ENCODE measurements at regions of chr20 and their contacts with region 1.

Region 1: DNA sequence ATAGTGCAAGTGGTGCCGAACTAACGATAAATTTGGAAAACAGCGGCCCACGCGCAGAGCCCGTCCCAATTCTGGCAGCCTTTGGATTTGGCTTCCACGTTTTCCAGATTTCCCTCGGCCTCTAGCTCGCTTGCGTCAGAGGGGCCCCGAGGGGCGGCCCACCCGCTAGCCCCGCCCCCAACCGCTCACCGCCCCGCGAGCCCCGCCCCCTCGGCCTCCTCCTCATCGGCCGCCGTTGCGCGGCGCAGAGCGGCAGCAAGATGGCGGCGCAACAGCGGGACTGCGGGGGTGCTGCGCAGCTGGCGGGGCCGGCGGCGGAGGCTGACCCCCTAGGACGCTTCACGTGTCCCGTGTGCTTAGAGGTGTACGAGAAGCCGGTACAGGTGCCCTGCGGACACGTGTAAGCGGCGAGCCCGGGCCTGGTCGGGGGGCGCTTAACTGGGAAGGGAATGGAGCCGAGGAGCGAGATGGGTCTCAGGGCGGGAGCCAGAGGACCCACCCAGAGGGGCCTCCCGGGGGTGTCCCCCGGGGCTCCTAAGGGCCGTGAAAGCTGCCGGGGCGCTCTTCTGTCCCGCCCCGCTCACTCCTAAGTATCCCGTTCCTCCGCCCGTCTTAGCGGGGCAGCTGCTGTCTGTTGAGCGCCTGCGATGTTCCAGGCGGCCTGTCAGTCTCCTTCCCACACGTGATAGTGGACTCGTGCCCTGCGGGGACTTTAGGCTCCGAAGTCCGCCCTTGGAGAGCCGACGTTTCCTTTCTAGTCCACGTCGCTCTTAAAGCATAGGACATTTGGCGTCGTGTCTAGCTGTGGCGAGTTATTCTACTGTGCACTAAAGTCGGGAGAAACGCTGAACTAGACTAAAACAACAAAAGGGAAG is at the start of gene RNF114:
- DNase-seq: peak; percentile 83
- ATAC-seq: peak; percentile 90
- H3K4me3 Mint-ChIP-seq: peak within 1 kb of the TSS; percentile 97
- H3K27ac Mint-ChIP-seq: peak within 1 kb of the TSS; percentile 88
- H3K4me1 Mint-ChIP-seq: peaks cover 58% of the 10 kb centered on the region
- H3K27me3 Mint-ChIP-seq: no peaks in the 10 kb centered on the region
- CTCF ChIP-seq: no peak
- total RNA-seq, gene RNF114: 56.5 and 56.6 TPM in 2 replicates

Region 2: DNA sequence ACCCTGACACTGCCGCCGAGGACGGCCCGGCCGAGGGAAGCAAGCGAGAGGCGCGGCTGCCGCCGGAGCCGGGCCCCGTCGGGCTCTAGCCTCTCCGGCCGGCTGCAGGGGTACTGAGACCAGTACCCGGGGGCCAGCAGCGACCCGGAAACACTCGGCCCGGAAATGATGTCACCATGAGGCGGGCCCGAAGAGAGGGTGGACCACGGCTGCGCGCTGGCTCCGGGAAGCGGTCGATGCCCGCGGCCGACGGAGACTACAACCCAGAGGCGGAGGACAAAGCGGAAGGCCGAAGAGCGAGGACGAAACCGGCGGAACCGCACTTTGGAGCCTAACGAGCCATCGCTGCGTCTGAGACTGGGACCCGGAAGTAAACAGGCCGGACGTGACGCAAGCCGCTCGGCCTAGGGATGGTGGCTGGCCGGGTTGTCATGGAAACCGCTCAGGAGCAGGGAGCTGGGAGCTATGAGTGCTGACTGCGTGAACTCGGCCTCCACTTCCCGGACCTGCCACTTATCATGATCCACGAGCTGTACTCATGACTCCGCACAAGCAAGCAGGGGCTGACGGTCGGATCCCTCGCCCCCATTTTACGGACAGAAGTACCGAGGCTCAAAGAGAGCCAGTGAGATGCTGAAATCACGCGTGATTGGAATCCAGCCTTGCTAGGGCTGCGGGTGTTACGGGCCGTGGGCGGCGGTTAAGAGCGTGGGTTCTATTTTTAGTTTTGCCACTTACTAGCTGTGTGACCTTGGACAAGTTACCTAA is 20.8 kb before region 1 on chr20 and contains the start of gene SPATA2:
- CTCF ChIA-PET with region 1: interaction called, 5 read pairs
- POLR2A ChIA-PET with region 1: interaction called, 45 read pairs
- intact Hi-C with region 1: loop called (anchors 1 kb)
- DNase-seq: peak; percentile 95
- ATAC-seq: peak; percentile 80
- H3K4me3 Mint-ChIP-seq: peak within 1 kb of the TSS; percentile 97
- H3K27ac Mint-ChIP-seq: peak within 1 kb of the TSS; percentile 99
- H3K4me1 Mint-ChIP-seq: peaks cover 34% of the 10 kb centered on the region
- H3K27me3 Mint-ChIP-seq: no peaks in the 10 kb centered on the region
- CTCF ChIP-seq: no peak
- total RNA-seq, gene SPATA2: 9.1 and 9.4 TPM in 2 replicates

Region 3: GRCh38 chr20:50153485-50154377 is 217.3 kb after region 1 on chr20 and contains the start of gene PEDS1:
- CTCF ChIA-PET with region 1: no interaction called
- POLR2A ChIA-PET with region 1: interaction called, 11 read pairs
- intact Hi-C with region 1: no loop called
- DNase-seq: peak; percentile 78
- ATAC-seq: peak; percentile 98
- H3K4me3 Mint-ChIP-seq: peak within 1 kb of the TSS; percentile 85
- H3K27ac Mint-ChIP-seq: peak within 1 kb of the TSS; percentile 59
- H3K4me1 Mint-ChIP-seq: peaks cover 36% of the 10 kb centered on the region
- H3K27me3 Mint-ChIP-seq: no peaks in the 10 kb centered on the region
- CTCF ChIP-seq: no peak
- total RNA-seq, gene PEDS1: 9.8 and 9.9 TPM in 2 replicates

Region 4: DNA sequence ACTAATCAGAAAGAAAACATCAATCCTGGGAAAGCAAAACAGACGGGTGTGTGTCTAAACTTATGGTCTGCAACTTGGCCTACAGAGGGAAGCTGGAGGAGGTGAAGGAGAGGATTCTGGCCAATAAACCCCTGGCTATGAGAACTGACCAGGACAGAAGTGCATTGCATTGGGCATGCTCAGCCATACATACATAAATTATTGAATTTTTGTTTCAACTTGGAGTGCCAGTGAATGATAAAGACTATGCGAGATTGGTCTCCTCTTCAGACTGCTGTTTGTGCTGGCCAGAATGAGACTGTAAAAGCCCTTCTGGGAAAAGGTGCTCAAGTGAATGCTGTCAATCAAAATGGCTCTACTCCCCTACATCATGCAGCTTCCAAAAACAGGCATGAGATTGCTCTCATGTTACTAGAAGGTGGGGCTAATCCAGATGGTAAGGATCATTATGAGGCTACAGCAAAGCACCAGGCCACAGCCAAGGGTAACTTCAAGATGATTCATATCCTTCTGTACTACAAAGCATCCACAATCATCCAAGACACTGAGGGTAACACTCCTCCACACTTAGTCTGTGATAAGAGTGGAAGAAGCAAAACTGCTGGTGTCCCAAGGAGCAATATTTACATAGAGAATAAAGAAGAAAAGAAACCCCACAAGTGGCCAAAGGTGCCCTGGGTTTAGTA is 977.4 kb after region 1 on chr20:
- CTCF ChIA-PET with region 1: no interaction called
- POLR2A ChIA-PET with region 1: interaction called, 12 read pairs
- intact Hi-C with region 1: no loop called
- DNase-seq: no peak
- ATAC-seq: no peak
- H3K4me3 Mint-ChIP-seq: no peak overlapping the region
- H3K27ac Mint-ChIP-seq: peak overlapping the region; percentile 30
- H3K4me1 Mint-ChIP-seq: peaks cover 82% of the 10 kb centered on the region
- H3K27me3 Mint-ChIP-seq: no peaks in the 10 kb centered on the region
- CTCF ChIP-seq: no peak

Region 5: GRCh38 chr20:51860111-51860882 is 1923.9 kb after region 1 on chr20:
- CTCF ChIA-PET with region 1: no interaction called
- POLR2A ChIA-PET with region 1: no interaction called
- intact Hi-C with region 1: no loop called
- DNase-seq: no peak
- ATAC-seq: no peak
- H3K4me3 Mint-ChIP-seq: no peak overlapping the region
- H3K27ac Mint-ChIP-seq: no peak overlapping the region
- H3K4me1 Mint-ChIP-seq: no peaks in the 10 kb centered on the region
- H3K27me3 Mint-ChIP-seq: peaks cover 13% of the 10 kb centered on the region
- CTCF ChIP-seq: no peak

Measured in activated B cell treated with CpG ODN at 0.5 μM for 24 hours (primary cell).